ENCODE measurements at regions of chr4 and their contacts with region 1.

Region 1: GRCh38 chr4:6327041-6327917 is 57.6 kb downstream of the WFS1 start:
- DNase-seq: peak; percentile 68 to 91 (median 83)
- H3K4me3 ChIP-seq: no peak overlapping the region
- H3K27ac ChIP-seq: no peak overlapping the region
- H3K4me1 ChIP-seq: no peaks in the 10 kb centered on the region
- H3K27me3 ChIP-seq: no peaks in the 10 kb centered on the region
- CTCF ChIP-seq: peak; percentile 93 to 99 (median 97)
- POLR2A ChIP-seq: no peak

Region 2: GRCh38 chr4:5998333-5998936 is 328.8 kb before region 1 on chr4:
- intact Hi-C with region 1: loop called in 1 of 2 experiments (anchors 10 kb)
- DNase-seq: peak; percentile 48 to 89 (median 65)
- H3K4me3 ChIP-seq: no peak overlapping the region
- H3K27ac ChIP-seq: no peak overlapping the region
- H3K4me1 ChIP-seq: no peaks in the 10 kb centered on the region
- H3K27me3 ChIP-seq: no peaks in the 10 kb centered on the region
- CTCF ChIP-seq: peak; percentile 69 to 91 (median 78)
- POLR2A ChIP-seq: no peak

Region 3: DNA sequence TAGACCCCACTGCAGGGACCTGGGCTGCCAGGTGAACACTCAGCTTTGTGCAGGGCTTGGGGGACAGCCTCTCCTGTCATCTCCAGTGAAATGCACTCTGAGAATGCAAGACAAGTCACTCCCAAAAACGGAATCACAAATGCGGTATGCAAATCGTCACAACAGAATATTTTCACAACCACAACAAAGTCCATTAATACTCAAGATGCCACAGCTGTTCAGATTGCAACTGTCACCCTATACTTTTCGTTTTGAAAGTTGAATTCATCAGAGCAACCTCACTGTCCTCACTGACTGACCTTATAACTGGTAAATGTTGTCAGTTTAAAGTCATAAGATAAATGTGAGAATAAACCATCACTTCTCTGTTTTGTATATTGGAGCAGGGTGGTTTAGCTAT is 143.5 kb before region 1 on chr4:
- intact Hi-C with region 1: no loop called
- DNase-seq: no peak
- H3K4me3 ChIP-seq: no peak overlapping the region
- H3K27ac ChIP-seq: no peak overlapping the region
- H3K4me1 ChIP-seq: no peaks in the 10 kb centered on the region
- H3K27me3 ChIP-seq: no peaks in the 10 kb centered on the region
- CTCF ChIP-seq: no peak
- POLR2A ChIP-seq: no peak

Region 4: GRCh38 chr4:6250235-6250983 is 76.9 kb before region 1 on chr4:
- intact Hi-C with region 1: loop called (anchors 2 to 5 kb)
- DNase-seq: peak in 2 of 7 donors; percentile 13 to 30
- H3K4me3 ChIP-seq: no peak overlapping the region
- H3K27ac ChIP-seq: no peak overlapping the region
- H3K4me1 ChIP-seq: no peaks in the 10 kb centered on the region
- H3K27me3 ChIP-seq: peaks cover 14% of the 10 kb centered on the region
- CTCF ChIP-seq: peak; percentile 76 to 87 (median 84)
- POLR2A ChIP-seq: no peak

Region 5: DNA sequence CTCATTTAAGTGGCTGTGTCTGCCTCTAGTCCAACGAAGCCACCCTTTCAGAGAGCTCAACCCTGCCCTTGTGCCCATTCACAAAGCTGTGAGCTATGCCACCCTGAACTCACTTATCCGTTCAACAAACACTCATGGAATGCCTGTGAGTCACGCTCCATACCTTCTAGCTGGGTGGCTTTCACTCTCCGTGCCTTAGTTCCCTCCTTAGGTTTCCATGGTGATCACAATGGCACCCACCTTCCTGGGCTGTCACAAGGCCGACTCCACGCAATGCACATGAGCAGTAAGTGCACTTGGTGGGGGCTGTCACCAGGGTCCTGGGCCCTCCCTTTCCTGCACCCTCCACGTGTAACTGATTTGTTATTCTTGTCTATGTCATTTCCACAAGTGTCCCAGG is 182.3 kb after region 1 on chr4:
- intact Hi-C with region 1: no loop called
- DNase-seq: peak in 1 of 7 donors; percentile 2
- H3K4me3 ChIP-seq: no peak overlapping the region
- H3K27ac ChIP-seq: no peak overlapping the region
- H3K4me1 ChIP-seq: no peaks in the 10 kb centered on the region
- H3K27me3 ChIP-seq: no peaks in the 10 kb centered on the region
- CTCF ChIP-seq: no peak
- POLR2A ChIP-seq: no peak

Region 6: DNA sequence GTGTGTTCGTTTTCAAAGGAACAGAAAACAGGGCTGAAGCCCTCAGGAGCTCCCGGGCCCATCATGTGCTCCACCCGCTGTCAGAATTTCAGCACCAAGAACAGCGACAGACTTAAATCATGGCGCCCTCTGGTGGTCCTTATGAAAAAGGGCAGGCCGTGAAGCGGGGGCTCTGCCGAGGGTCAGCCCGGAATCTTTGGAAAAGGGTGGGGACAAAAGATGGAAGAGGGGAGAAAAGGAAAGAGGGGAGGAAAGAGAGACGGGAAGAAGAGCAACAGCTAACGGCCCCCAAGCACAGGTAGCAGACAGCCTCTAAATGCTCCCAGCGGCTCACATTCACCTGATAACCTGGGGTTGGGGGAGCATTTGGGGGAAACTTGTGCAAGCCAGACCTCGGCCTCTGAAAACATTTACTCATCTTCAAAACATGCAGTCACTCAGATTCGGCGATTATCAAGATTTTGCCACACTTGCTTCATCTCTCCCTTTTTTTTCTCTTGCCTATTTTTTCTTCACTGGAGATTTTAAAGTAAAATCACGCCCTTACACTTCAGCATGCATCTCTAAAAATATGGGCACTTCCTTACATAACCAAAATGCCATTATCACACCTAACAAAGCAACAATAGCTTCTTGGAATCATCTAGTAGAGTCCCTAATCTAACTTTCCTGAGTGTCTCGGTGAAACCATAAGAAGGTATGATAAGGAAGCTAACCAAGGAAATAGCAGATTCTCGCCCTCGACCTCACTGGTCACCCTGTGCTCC is 219.6 kb after region 1 on chr4:
- intact Hi-C with region 1: loop called (anchors 5 to 10 kb)
- DNase-seq: peak; percentile 27 to 69 (median 46)
- H3K4me3 ChIP-seq: no peak overlapping the region
- H3K27ac ChIP-seq: no peak overlapping the region
- H3K4me1 ChIP-seq: no peaks in the 10 kb centered on the region
- H3K27me3 ChIP-seq: no peaks in the 10 kb centered on the region
- CTCF ChIP-seq: peak; percentile 63 to 87 (median 80)
- POLR2A ChIP-seq: no peak